ENCODE measurements at regions of chr12 and their contacts with region 1.

Region 1: DNA sequence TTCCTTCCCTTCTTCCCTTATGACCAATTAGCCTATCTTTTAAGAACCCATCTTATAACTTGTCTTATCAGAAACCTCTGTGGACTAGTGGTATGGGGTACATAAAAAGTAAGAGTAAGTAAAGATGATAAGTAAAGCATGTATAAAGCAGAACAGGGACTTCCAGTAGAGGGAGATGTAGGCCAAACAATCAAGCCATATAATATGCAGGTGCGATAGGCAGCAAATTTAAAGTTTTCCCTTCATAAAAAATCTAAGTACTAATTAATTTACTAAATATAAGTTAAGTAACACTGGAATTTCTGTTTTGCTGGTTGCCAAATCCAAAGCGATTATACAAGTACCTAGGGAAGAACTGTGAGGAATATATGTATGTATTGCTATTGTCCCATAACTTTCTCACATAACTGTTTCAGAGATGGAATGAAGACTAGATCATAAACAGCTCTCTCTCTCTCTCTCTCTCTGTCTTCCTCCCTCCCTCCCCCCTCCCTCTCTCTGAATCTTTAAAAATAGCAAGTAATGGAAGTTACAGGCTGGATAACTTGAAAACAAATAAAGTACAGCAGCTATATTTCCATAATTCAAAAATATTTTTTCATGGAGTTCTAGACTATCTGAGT is 25.7 kb downstream of the METTL25 start:
- DNase-seq: no peak
- ATAC-seq: peak; percentile 76
- H3K4me3 ChIP-seq: no peak overlapping the region
- H3K27ac ChIP-seq: no peak overlapping the region
- H3K4me1 ChIP-seq: no peaks in the 10 kb centered on the region
- H3K27me3 ChIP-seq: no peaks in the 10 kb centered on the region
- CTCF ChIP-seq: peak; percentile 28 to 54 (median 30); a peak in 4 of 6 replicates
- EP300 ChIP-seq: no peak
- POLR2A ChIP-seq: no peak
- RAD21 ChIP-seq: peak; percentile 64

Region 2: GRCh38 chr12:82627569-82628198 is 243.6 kb after region 1 on chr12:
- CTCF ChIA-PET with region 1: interaction called, 6 read pairs
- POLR2A ChIA-PET with region 1: no interaction called
- RAD21 ChIA-PET with region 1: no interaction called
- SMC1A ChIA-PET with region 1: interaction called, 4 read pairs
- in situ Hi-C with region 1: no loop called
- intact Hi-C with region 1: loop called (anchors 5 kb)
- DNase-seq: no peak
- ATAC-seq: peak; percentile 81
- H3K4me3 ChIP-seq: no peak overlapping the region
- H3K27ac ChIP-seq: no peak overlapping the region
- H3K4me1 ChIP-seq: no peaks in the 10 kb centered on the region
- H3K27me3 ChIP-seq: no peaks in the 10 kb centered on the region
- CTCF ChIP-seq: peak; percentile 40 to 65 (median 43); a peak in 4 of 6 replicates
- EP300 ChIP-seq: no peak
- POLR2A ChIP-seq: no peak
- RAD21 ChIP-seq: peak; percentile 81